ENCODE measurements at regions of chr2 and their contacts with region 1.

Region 1: GRCh38 chr2:18991177-18992168 is 366.9 kb downstream of the OSR1 start:
- DNase-seq: peak; percentile 94
- ATAC-seq: peak; percentile 84
- H3K4me3 ChIP-seq: peak overlapping the region; percentile 33; the same call in 1 of the 2 replicates
- H3K27ac ChIP-seq: peak overlapping the region; percentile 80
- H3K4me1 ChIP-seq: peaks cover 33% of the 10 kb centered on the region
- H3K27me3 ChIP-seq: no peaks in the 10 kb centered on the region
- CTCF ChIP-seq: no peak

Region 2: GRCh38 chr2:18473241-18474181 is 518.0 kb before region 1 on chr2:
- CTCF ChIA-PET with region 1: no interaction called
- POLR2A ChIA-PET with region 1: no interaction called
- intact Hi-C with region 1: no loop called
- DNase-seq: peak; percentile 29
- ATAC-seq: peak; percentile 74
- H3K4me3 ChIP-seq: no peak overlapping the region
- H3K27ac ChIP-seq: no peak overlapping the region
- H3K4me1 ChIP-seq: no peaks in the 10 kb centered on the region
- H3K27me3 ChIP-seq: no peaks in the 10 kb centered on the region
- CTCF ChIP-seq: no peak

Region 3: DNA sequence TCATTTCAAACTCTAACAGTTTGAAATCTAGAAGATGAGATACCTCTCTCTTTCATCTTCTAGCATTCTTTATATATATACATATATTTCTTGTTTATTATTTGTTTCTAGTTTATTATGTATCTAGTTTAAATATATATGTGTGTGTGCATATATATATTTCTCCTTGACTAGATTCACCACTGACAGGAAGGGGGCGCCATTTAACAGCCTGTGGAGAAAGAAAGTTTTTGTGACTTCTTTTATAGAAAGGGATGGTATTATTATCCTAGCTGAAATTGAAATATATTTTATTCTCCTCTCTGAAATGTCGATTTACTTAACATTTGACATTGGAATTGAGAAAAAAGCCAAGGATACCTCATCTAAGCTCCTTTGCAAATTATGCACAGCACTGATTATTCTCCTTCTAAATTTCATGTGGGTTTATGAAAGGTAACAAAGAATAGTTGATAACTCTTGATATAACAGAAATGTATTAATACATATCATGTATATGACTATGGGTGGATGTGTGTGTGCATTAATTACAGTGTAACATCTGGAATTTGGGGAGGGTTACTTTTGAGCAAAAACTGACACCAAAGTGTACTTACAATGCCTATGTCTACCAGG is 241.5 kb before region 1 on chr2:
- CTCF ChIA-PET with region 1: no interaction called
- POLR2A ChIA-PET with region 1: no interaction called
- intact Hi-C with region 1: loop called (anchors 1 kb)
- DNase-seq: peak; percentile 74
- ATAC-seq: no peak
- H3K4me3 ChIP-seq: no peak overlapping the region
- H3K27ac ChIP-seq: no peak overlapping the region
- H3K4me1 ChIP-seq: peaks cover 35% of the 10 kb centered on the region
- H3K27me3 ChIP-seq: no peaks in the 10 kb centered on the region
- CTCF ChIP-seq: peak; percentile 83

Region 4: DNA sequence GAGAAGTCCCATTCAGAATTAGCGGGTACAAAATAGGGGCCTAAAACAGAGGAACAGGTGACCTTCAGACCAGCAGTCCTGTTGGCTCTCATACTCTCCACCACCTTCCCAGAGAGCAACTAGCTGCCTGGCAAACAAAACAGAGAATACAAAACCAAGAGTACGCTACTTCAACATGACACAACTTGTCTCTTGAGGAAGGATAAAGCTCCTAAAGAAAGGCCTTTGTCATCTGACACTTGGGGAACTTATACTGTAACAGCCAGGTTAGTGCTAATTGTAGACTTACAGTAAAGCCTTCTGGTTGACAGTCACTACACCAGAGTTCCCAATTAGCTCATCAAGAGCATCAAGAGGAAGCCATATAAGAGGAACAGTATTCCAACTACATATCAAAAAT is 120.0 kb before region 1 on chr2:
- CTCF ChIA-PET with region 1: no interaction called
- POLR2A ChIA-PET with region 1: no interaction called
- intact Hi-C with region 1: no loop called
- DNase-seq: no peak
- ATAC-seq: no peak
- H3K4me3 ChIP-seq: no peak overlapping the region
- H3K27ac ChIP-seq: no peak overlapping the region
- H3K4me1 ChIP-seq: no peaks in the 10 kb centered on the region
- H3K27me3 ChIP-seq: no peaks in the 10 kb centered on the region
- CTCF ChIP-seq: no peak

Region 5: DNA sequence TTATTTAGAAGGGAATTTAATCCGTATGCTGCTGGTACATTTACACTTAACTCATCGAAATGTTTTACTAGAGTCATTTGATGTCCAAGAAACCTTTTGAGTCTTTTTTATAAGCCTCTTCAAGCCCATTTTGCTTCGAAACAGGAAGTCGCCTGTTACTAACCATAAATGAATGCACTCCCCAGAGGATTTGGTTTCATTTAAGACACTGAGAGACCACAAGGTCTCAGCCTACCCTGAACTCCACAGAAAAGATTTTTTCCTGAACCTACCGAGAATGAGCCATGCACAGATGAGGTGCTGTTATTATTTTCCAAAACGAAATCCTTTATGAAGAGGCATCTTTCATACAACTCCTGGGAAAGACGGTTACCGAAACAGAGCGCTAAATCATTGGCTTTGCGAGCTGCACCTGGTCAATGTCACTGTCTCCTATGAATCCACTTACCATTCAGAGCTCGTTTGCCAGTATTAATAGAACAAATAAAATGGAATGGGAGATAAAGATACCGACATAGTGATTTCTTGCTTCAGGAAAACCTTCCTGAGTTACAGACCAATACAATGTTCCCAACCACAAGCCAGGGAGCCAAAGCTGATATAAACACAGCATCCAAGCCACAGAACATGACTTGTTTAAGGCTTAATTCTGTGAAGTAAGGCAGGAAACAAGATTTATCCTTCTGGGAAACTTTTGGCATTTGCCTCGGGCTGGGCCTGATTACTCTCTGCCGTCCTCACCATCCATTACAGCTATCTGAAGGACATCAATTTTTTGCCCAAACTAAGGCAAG is 15.1 kb before region 1 on chr2:
- CTCF ChIA-PET with region 1: no interaction called
- POLR2A ChIA-PET with region 1: interaction called, 3 read pairs
- intact Hi-C with region 1: loop called (anchors 1 kb)
- DNase-seq: peak; percentile 89
- ATAC-seq: peak; percentile 81
- H3K4me3 ChIP-seq: peak overlapping the region; percentile 14
- H3K27ac ChIP-seq: peak overlapping the region; percentile 64
- H3K4me1 ChIP-seq: peaks cover 30% of the 10 kb centered on the region
- H3K27me3 ChIP-seq: no peaks in the 10 kb centered on the region
- CTCF ChIP-seq: no peak

Region 6: GRCh38 chr2:19104503-19104902 is 113.0 kb after region 1 on chr2:
- CTCF ChIA-PET with region 1: no interaction called
- POLR2A ChIA-PET with region 1: no interaction called
- intact Hi-C with region 1: loop called (anchors 1 kb)
- DNase-seq: peak; percentile 92
- ATAC-seq: peak; percentile 79
- H3K4me3 ChIP-seq: peak overlapping the region; percentile 34; the same call in 1 of the 2 replicates
- H3K27ac ChIP-seq: peak overlapping the region; percentile 79
- H3K4me1 ChIP-seq: peaks cover 55% of the 10 kb centered on the region
- H3K27me3 ChIP-seq: no peaks in the 10 kb centered on the region
- CTCF ChIP-seq: no peak

Region 7: DNA sequence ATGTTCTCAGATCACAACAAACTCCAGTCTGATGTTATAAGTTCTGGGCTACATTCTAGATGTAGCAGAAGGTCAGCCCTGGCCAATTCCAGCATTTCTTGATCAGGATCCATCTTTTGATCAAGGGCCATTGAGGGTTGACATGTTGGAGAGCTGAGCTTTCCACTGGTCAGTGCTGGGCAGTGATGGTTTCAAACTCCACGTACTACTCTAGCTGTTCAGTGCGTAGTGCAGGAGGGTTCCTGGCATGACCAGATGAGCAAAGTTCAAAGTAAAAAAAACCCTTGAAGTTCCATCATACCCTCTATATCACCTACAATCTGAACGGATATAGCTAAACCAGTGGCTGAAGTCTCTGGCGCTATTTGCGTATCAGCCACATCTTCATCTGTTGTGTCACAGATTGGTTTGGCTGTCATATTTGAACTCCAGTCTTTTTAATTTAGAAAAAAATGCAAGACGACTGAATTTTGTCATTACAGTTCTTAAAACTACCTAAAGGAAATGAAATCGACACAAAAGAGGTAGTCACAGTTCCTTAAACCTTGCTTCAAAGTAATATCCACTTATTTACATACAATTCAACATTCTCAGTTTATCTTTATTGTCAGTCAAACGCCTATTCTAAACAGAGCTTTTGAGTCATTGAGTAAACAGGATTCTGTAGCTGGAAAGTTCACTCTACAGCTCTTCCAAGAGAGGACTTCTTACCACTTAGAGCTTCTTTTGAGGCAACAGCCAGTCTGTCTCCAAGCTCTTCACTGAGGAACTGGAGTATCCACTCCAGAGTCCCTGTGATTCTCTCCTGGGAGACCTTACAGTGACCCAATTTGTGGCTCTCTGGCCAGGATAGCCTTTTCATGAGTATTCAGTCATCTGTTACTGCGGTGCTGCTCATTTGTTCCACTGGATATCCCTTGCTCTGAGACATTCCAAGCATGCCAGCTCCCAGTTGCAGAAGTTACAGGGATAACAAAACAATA is 577.6 kb after region 1 on chr2:
- CTCF ChIA-PET with region 1: no interaction called
- POLR2A ChIA-PET with region 1: no interaction called
- intact Hi-C with region 1: loop called (anchors 10 kb)
- DNase-seq: peak; percentile 84
- ATAC-seq: peak; percentile 96
- H3K4me3 ChIP-seq: peak overlapping the region; percentile 20; the same call in 1 of the 2 replicates
- H3K27ac ChIP-seq: peak overlapping the region; percentile 76
- H3K4me1 ChIP-seq: peaks cover 15% of the 10 kb centered on the region
- H3K27me3 ChIP-seq: no peaks in the 10 kb centered on the region
- CTCF ChIP-seq: no peak

Measured in PC-3 (cell line).